ENCODE measurements at regions of chr7 and their contacts with region 1.

Region 1: GRCh38 chr7:75866489-75867389 is 12.1 kb upstream of the RHBDD2 start:
- DNase-seq: peak; percentile 82

Region 2: DNA sequence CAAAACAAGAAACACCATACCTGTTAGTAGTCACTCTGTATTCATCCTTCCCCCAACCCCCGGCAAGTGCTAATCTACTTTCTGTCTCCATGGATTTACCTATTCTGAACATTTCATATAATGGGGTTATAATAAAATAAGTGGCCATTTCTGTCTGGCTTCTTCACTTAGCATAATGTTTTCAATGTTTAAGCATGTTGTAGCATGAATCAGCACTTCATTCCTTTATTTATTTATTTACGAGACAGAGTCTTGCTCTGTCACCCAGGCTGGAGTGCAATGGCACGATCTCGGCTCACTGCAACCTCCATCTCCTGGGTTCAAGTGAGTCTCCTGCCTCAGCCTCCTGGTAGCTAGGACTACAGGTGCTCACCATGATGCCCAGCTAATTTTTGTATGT is 197.2 kb before region 1 on chr7:
- intact Hi-C with region 1: no loop called
- DNase-seq: no peak

Region 3: DNA sequence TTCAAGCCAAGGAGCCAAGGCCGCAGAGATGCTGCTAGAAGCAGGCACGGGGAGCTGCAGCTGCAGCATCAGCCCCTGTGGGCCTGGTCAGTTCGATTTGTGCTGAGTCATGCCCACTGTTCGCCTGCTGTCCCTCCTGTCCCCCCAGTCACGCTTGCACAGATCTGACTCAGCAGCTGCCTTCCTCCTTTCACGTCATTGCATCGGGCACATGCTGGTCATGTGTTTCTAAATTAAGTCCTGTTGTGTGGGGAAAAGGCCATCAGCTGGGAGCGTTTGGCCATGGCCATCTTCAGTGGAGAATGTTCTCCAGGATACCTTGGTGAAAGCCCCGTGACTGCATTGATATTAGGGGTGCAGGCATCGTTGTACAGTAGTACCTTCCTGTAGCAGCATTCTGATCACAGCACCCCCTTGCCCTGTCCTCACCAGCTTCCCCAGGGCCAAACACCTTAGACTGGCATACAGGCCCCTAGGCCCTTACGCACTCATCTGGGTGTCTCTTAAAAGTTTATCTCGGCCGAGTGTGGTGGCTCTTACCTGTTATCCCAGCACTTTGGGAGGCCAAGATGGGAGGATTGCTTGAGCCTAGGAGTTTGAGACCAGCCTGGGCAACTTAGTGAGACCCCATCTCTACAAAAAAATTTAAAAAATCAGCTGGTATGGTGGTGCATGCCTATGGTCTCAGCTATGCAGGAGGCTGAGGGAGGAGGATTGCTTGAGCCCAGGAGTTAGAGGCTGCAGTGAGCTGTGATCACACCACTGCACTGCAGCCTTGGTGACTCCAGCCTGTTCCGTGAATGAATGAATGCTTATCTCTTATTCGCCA is 71.4 kb after region 1 on chr7:
- intact Hi-C with region 1: no loop called
- DNase-seq: peak; percentile 83

Region 4: GRCh38 chr7:76020031-76020714 is 153.4 kb after region 1 on chr7:
- intact Hi-C with region 1: loop called (anchors 1 kb)
- DNase-seq: peak; percentile 93

Region 5: DNA sequence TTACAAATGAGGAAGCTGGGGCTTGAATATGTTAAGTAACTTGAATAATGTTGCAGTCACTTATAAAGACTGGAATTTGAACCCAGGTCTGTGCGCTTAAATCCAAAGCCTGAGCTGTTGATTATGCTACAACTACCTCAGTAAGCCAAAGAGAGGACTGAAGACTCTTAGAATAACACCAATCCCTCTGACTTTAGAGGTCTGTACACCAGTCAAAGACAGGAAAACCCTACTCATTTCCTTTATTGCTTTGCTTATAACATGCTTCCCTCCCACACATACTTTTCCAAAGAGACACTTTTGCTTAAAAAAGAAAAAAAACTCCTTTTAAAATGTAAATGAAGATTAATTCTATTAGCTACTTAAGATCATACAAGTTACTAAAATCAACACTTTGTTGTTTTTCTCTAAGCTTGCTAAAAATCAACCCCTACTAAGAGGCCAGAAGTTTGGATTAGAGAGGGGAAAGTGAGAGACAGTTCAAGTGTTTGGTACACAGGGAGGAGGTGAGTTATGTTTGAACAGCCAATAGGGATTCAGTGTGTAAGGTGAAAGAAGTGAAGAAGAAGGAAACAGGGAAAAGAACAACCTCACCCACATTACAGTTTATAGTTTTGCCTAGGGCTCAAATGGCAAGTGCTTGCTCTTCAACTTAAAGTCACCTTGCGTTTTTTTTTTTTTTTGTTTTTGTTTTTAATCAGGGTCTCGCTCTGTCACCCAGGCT is 255.9 kb after region 1 on chr7:
- intact Hi-C with region 1: loop called (anchors 10 kb)
- DNase-seq: no peak

Region 6: DNA sequence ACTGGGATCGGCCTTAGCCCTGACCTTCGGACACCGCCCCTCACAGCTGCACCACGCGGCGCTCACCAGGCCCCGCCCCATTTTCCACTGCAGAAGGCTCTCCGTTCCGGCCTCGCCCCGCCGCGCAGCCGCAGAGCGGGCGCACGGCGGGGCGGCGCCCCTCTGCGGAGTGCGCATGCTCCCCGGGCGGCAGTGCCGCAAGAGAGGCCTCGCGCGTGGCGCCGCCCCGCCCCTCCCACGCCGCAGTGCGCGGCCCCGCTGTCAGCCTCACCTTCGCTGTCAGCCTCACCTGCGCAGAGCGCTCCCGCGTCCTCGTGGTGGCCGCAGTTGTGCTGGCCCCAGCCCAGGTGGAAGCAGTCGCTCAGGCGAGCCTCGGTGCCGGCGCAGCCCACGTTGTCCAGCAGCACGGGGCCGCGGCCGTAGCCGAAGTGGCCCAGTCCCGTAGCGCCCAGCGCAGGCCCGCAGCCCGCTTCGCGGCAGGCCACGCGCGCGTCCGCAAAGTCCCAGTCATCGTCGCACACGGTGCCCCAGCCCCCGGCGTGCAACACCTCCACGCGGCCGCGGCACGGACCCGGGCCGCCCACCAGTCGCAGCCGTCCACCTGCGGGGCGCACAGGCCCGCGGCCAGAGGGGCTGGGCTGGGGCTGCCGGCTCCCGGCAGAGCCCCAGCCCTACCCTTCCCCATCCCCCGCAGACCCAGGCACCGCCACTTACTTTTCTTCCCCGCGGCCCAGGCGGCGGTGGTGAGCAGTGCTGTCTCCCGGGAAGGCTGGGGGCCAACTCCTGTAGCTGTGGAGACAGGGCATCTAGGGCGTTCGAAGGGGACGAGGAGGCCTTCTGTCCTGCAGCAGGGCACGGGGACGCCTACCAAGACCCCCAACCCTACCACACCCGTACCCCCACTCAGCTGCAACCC is 526.6 kb after region 1 on chr7:
- intact Hi-C with region 1: no loop called
- DNase-seq: peak; percentile 97

Region 7: GRCh38 chr7:77184990-77185389 is 1318.3 kb after region 1 on chr7:
- intact Hi-C with region 1: no loop called
- DNase-seq: no peak

Measured in cardiac septum (tissue), 1 donor.